Activated CD4-positive, alpha-beta memory T cell treated with anti-CD3 and anti-CD28 coated beads for 36 hours (primary cell): ENCODE measurements at regions of chr10 and their contacts with region 1.

Region 1: DNA sequence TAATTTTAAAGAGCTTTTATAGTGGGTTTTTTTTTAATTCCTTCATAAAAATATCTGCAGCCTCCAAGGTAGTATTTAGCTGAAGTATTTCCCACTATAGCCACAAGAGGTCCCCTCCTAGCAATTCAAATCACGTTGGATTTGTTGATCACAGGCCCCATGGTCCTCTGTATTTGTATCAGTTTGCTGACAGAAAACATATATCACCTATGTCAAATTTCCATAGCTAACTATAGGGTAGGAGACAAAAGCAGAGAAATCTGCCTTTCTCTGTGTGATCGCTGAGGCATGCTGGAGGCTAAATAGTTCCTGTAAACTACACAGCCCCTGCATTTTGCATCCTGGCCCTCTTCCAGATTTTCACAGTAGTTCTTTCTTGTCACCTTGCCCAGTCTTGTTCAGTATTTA is 1.7 kb upstream of the CTNNA3 start:
- DNase-seq: no peak
- H3K4me3 Mint-ChIP-seq: no peak overlapping the region
- H3K27ac Mint-ChIP-seq: no peak overlapping the region
- H3K4me1 Mint-ChIP-seq: peaks cover 9% of the 10 kb centered on the region
- H3K27me3 Mint-ChIP-seq: peaks cover 12% of the 10 kb centered on the region

Region 2: DNA sequence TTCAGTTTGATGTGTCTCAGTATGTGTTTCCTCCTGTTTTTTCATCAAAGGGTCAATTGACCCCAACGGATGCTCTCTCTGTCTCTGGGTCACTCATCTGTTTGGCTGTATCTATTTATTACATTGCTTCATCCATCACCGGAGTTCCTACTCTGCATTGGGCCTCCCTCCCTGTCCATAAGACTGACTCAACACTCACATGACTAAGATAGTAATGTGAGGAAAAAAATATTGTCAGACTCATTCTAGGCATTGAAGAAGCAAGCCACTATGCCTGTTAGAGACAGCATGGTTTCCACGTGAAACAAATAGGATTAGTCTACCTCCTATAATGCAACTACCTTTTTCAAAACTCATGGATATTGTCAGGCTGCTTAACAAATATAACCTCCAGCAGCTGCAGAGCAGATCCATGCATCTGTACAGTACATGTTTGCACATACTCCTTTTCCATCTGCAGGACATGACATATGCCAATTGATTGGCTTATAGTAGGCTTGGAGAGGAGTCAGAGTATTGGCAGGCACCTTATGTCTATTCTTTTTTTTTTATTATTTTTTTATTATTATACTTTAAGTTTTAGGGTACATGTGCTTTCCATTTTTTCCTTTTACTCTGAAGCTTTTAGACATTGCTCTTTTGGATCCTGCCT is 496.7 kb before region 1 on chr10:
- CTCF ChIA-PET with region 1: no interaction called
- POLR2A ChIA-PET with region 1: no interaction called
- intact Hi-C with region 1: no loop called
- DNase-seq: no peak
- H3K4me3 Mint-ChIP-seq: no peak overlapping the region
- H3K27ac Mint-ChIP-seq: no peak overlapping the region
- H3K4me1 Mint-ChIP-seq: peaks cover 5% of the 10 kb centered on the region
- H3K27me3 Mint-ChIP-seq: no peaks in the 10 kb centered on the region

Region 3: DNA sequence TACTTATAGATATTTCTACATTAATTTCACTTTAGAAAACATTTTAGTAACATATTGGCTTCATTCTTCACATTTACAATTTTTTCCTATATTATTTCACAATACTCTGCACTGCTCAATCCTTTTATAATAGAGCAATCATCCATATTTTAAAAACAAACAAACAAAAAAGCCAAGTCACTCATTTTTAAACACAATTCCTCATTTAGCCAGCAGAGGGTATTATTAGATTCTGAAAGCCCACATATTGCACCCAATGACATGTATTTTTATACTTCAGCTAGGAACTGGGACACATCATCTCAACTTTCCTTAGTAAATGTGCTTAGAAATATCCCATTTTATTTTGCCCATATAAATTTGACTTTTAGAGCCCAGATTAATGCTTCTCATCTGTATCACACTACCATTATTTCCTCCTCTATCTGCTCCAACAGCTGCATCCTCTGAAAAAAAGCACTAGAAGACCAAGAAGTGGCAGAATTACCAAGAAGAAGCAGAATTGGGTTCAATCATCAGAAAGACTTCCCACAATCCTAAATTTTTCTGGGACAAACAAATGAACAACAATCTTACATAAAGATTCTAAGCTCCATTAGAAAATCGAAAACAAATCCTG is 31.2 kb before region 1 on chr10:
- CTCF ChIA-PET with region 1: interaction called, 16 read pairs
- POLR2A ChIA-PET with region 1: no interaction called
- intact Hi-C with region 1: no loop called
- DNase-seq: no peak
- H3K4me3 Mint-ChIP-seq: no peak overlapping the region
- H3K27ac Mint-ChIP-seq: no peak overlapping the region
- H3K4me1 Mint-ChIP-seq: no peaks in the 10 kb centered on the region
- H3K27me3 Mint-ChIP-seq: no peaks in the 10 kb centered on the region

Region 4: DNA sequence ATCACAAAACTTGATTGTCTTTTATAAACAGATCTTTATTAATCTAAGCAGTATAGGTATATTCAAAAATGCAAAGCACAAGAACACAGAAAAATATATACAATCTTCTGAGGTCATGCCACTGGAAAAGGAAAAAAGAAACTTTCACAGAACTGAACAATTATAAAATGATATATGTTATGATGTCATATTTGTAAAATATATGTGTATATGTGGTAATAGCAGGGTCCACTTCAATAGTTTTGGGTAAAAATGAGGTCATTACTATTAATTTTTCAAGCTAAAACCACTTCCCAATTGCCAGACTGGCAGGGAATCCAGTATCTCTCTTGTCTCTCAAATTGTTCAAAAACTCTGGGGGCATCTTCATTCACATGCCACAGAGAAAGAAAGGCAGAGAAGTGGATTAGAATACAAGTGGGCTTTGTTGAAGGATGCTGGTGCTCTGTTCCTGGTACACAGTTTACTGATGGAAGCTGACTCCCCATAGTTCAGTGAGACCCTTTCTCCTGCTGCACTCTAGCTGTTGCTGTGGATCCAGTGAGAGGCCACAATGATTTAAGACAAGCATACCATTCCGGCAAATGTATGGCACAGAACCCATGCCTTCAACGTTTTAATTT is 21.4 kb before region 1 on chr10:
- CTCF ChIA-PET with region 1: interaction called, 11 read pairs
- POLR2A ChIA-PET with region 1: no interaction called
- intact Hi-C with region 1: no loop called
- DNase-seq: no peak
- H3K4me3 Mint-ChIP-seq: no peak overlapping the region
- H3K27ac Mint-ChIP-seq: no peak overlapping the region
- H3K4me1 Mint-ChIP-seq: no peaks in the 10 kb centered on the region
- H3K27me3 Mint-ChIP-seq: peaks cover 23% of the 10 kb centered on the region

Region 5: DNA sequence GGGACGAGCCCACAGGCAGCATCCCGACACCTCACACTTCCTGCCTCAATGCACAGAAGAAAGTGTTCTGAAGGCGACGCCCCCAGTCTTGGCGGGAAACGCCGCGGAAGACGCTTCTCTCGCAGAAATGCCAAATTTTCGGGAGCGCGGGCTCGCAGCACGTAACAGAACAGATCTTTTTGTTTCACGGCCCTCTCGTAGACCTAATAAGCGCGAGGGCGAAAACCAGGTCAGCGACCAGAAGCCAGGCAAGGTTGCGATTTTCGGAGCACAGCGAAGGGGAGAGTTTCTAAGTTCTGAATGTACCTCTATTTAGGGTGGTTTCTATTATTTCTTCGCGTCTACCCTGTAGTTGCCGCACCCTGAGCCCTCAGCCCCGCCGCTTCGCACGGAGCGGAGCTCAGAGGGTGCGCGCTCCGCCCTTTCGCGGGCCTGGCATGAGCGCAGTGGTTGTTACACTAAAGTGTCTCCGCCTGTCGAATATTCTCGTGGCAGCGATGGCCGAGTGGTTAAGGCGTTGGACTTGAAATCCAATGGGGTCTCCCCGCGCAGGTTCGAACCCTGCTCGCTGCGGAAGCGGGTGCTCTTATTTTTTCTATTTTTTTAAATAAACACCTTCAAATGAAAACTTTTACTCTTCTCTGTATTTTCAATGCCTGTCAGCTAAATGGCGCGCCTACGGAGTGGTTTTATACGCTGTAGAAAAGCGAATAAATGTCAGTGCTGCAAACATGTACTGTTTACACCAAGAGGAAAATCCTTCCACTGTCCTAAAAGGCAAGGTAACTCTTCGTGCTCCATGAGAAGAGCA is 66.5 kb after region 1 on chr10:
- CTCF ChIA-PET with region 1: interaction called, 20 read pairs
- POLR2A ChIA-PET with region 1: no interaction called
- intact Hi-C with region 1: loop called (anchors 5 kb)
- DNase-seq: peak; percentile 98
- H3K4me3 Mint-ChIP-seq: peak overlapping the region; percentile 78
- H3K27ac Mint-ChIP-seq: peak overlapping the region; percentile 91
- H3K4me1 Mint-ChIP-seq: peaks cover 11% of the 10 kb centered on the region
- H3K27me3 Mint-ChIP-seq: peaks cover 4% of the 10 kb centered on the region

Region 6: GRCh38 chr10:67815571-67816059 is 117.9 kb after region 1 on chr10:
- CTCF ChIA-PET with region 1: no interaction called
- POLR2A ChIA-PET with region 1: no interaction called
- intact Hi-C with region 1: no loop called
- DNase-seq: no peak
- H3K4me3 Mint-ChIP-seq: no peak overlapping the region
- H3K27ac Mint-ChIP-seq: peak overlapping the region; percentile 76
- H3K4me1 Mint-ChIP-seq: peaks cover 28% of the 10 kb centered on the region
- H3K27me3 Mint-ChIP-seq: peaks cover 3% of the 10 kb centered on the region

Region 7: GRCh38 chr10:67827811-67828210 is 130.1 kb after region 1 on chr10:
- CTCF ChIA-PET with region 1: no interaction called
- POLR2A ChIA-PET with region 1: no interaction called
- intact Hi-C with region 1: no loop called
- DNase-seq: no peak
- H3K4me3 Mint-ChIP-seq: no peak overlapping the region
- H3K27ac Mint-ChIP-seq: no peak overlapping the region
- H3K4me1 Mint-ChIP-seq: no peaks in the 10 kb centered on the region
- H3K27me3 Mint-ChIP-seq: no peaks in the 10 kb centered on the region